Motor neuron (in vitro differentiated cells): ENCODE measurements at regions of chr3 and their contacts with region 1.

Region 1: DNA sequence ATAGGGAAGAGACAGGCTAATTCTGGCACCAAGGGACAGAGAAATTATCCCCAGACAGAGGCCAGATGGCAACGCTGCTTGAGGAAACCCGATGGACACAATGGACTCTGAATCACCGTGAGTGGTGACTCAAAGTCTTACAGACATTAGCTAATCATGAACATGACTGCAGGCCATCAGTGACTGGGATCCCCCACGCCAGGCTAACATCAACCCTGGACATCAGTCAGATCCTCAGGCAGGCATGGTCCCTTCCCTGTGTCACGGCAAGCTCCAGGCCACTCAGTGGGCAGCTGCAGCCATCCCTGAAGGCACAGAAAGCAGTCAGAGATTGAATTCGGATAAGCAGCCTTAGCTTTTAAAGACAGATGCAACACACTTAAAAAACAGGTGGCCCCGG is 23.8 kb upstream of the OXTR start:
- ATAC-seq: peak in 3 of 8 experiments; percentile 31 to 99 (median 75)
- H3K4me3 ChIP-seq: no peak overlapping the region
- H3K27ac ChIP-seq: no peak overlapping the region
- H3K4me1 ChIP-seq: no peaks in the 10 kb centered on the region

Region 2: GRCh38 chr3:8509961-8510360 is 283.3 kb before region 1 on chr3:
- in situ Hi-C with region 1: no loop called
- ATAC-seq: peak in 7 of 8 experiments; percentile 35 to 63 (median 45)
- H3K4me3 ChIP-seq: no peak overlapping the region
- H3K27ac ChIP-seq: no peak overlapping the region
- H3K4me1 ChIP-seq: peaks cover 0 to 11% of the 10 kb centered on the region in 2 donors

Region 3: DNA sequence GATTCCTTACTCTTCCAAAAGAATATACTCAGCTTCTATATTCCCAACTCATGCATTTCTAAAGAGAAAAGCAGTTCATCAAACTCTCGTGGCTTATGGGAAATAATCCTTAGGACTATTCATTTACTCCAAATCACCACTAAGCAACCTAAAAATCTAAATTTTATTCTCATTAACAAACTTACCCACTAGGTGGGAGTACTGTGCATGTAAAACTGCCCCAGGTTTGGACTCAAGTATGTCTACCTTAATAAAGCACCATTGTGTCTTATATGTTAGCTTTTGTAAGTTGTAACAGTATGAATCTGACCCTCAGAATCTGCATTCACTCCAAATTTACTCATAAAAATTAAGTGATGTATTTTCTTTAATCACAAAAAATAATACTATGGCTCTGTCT is 144.8 kb after region 1 on chr3:
- in situ Hi-C with region 1: loop called in 1 of 9 experiments (anchors 25 kb)
- ATAC-seq: peak in 3 of 8 experiments; percentile 44 to 52 (median 44)
- H3K4me3 ChIP-seq: no peak overlapping the region
- H3K27ac ChIP-seq: no peak overlapping the region
- H3K4me1 ChIP-seq: no peaks in the 10 kb centered on the region